AG04449 (cell line): ENCODE measurements at regions of chr9 and their contacts with region 1.

Region 1: DNA sequence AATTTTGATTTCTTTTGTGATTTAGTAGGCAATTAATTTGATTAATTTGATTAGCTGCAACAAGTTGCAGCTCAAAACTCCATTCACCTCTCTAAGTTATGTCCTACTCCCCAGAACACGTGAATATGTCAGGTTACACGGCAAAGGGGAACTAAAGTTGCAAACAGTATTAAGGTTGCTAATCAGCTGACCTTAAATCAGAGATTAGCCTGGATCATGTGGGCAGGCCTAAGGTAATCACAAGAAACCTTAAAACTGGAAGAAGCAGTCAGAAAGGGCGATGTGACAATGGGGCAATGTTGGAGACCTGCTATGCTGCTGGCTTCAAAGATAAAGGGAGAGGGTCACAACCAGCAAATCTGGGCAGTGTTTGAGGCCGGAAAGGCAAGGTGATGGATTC is 47.3 kb upstream of the ANXA1 start:
- DNase-seq: no peak
- H3K4me3 ChIP-seq: no peak overlapping the region
- CTCF ChIP-seq: no peak

Region 2: DNA sequence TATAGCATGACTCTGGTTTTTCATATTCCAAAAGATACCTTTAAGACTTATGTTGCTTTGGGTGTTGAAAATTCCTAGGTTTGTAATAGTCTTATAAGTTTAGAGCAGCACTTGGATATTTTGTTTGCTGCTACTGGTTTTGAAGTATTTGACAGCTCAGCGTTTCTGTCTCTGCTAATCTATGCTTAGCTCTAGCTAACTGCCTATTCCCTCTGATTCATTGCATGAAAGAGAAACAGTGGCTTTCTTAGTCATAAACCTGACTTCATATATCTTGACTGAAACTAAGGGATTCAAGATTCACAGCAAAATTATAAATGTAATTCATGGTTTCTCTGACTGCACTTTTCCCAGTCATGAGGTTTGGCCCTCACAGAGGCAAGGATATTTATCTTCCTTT is 11.7 kb after region 1 on chr9:
- CTCF ChIA-PET with region 1: interaction called, 34 read pairs
- POLR2A ChIA-PET with region 1: interaction called, 3 read pairs
- DNase-seq: no peak
- H3K4me3 ChIP-seq: no peak overlapping the region
- CTCF ChIP-seq: no peak

Region 3: DNA sequence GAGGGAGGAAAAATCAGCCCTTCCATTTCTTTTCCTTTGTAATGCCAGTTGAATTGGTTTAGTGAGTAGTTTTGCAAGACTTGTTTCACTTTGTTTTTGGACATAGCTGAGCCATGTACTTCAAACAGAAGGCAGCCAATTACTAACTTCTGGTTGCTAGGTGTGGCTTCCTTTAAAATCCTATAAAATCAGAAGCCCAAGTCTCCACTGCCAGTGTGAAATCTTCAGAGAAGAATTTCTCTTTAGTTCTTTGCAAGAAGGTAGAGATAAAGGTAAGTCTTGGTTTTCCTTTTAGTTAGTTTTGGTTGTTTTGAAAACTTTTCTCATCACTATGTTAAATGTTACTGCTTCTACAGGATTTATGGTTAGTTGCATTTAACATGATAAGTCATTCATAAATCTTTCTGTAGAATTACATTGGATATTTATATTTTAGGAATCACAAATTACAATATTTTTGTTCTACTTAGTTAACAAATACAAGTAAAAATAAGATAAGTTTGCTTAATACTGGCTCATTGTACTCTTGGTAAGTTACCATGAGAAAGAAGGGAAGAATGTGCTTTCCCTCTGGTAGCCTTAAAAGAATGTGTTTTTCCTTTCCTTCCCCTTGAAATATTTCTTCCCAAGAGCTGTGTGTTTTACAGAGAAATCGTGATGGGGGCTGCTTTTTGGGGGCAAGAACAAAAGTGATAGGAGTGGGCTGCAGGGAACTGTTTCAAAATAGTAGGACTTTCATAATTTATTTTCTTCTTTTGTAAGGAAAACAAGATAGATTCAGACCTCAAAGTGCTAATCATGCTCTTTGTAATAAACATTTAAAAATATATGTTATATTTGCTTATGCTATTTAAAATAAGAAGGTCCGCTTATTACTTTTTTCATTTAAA is 47.6 kb after region 1 on chr9 and contains the start of gene ANXA1:
- CTCF ChIA-PET with region 1: interaction called, 21 read pairs
- POLR2A ChIA-PET with region 1: interaction called, 5 read pairs
- DNase-seq: peak; percentile 41
- H3K4me3 ChIP-seq: peak within 1 kb of the TSS; percentile 71
- CTCF ChIP-seq: no peak

Region 4: DNA sequence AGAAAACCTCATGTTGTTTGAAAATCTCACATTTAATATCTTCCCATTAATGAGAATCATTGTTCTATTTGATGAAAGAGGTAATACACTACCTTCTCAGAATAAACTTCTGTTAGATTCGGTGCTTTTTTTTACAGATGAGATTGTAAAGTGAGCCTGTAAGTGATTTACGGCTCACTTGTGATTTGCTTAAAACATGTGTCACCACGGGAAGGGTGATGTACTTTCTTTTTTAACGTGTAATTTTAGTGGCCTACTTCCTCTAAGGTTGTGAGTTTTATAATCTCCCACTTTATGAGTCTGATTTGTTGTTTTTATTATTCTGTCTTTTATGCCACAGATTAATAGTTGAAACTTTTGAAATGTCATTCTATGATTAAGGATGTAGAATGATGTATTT is 63.3 kb after region 1 on chr9:
- CTCF ChIA-PET with region 1: interaction called, 21 read pairs
- POLR2A ChIA-PET with region 1: interaction called, 6 read pairs
- DNase-seq: no peak
- H3K4me3 ChIP-seq: no peak overlapping the region
- CTCF ChIP-seq: no peak

Region 5: GRCh38 chr9:73173557-73174329 is 69.4 kb after region 1 on chr9:
- CTCF ChIA-PET with region 1: interaction called, 193 read pairs
- POLR2A ChIA-PET with region 1: interaction called, 6 read pairs
- DNase-seq: no peak
- H3K4me3 ChIP-seq: no peak overlapping the region
- CTCF ChIP-seq: no peak